Ascending aorta (tissue), 2 donors: ENCODE measurements at regions of chr2 and their contacts with region 1.

Region 1: DNA sequence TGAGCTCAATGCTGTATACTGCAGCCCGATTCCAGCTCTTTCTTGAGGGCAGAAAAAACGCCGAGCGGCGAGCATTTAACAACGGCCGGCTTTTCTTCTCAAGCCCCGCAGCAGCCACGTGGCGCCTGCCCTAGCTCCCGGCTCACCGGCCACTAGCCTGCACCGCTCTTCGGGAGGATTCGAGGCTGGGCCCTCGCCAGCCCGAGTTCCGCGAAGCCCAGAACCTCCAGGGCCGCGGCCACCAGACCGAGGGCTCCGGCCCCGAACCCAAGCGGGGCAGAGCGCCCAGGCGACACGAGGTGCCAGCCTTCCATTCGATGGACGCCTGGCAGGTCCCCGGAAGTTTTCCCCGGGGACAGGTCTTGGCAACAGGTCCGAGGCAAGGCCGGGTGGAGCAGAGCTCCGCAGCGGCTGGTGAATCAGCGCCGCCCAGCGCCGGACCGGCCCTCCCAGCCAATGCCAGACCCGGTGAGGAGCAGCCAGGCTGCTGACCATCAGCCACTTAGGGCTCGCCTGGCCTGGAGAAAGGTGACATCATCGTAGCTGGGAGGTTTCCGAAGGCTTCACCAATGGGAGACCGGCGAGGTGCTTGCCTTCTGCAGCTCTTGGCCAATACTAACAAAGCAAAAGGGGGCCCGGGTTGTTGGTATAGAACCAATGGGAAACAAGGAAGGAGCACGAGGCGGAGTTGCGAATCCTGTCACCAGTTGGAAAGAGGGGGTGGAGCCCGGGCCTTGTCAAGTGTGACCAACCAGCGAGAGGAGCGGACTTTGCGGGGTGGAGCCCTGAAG is 544 bp upstream of the MXD1 start:
- DNase-seq: peak; percentile 100
- H3K4me3 ChIP-seq: peak overlapping the region; percentile 67 to 76
- H3K27ac ChIP-seq: peak overlapping the region; percentile 92
- H3K4me1 ChIP-seq: peaks cover 0 to 17% of the 10 kb centered on the region in 2 donors
- H3K27me3 ChIP-seq: no peaks in the 10 kb centered on the region
- CTCF ChIP-seq: peak in 2 of 3 experiments; percentile 15 to 20

Region 2: DNA sequence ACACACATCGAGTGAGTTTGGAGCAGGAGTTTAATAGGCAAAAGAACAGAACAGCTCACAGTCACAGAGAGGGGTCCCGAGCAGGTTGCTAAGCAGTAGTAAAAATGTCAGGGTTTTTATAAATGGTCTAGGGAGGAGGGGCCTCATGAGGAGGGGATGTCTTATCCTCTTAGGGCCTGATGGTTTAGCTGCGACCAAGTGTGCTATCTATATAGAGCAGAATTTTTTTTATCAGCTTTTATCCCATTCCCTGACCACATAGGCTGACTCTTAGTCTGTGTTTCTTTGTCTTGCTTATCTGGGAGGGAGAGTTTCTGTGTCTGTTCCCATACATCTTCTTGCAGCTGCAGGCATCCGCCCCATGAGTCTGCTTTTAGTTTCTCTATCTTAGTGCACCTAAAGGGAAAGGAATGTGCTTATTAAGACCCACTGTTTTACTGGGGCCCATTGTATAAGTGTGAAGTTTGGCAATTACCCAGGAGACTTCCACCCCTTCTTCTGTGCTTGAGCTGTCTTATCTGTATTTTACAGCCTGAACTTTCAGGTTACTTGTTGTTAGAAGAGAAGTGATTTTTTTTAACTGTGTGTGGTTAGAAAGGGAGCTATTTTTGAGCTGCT is 115.3 kb before region 1 on chr2:
- intact Hi-C with region 1: no loop called
- DNase-seq: no peak
- H3K4me3 ChIP-seq: peak overlapping the region; percentile 49 to 64
- H3K27ac ChIP-seq: peak overlapping the region; percentile 84 to 85
- H3K4me1 ChIP-seq: peaks cover 0 to 13% of the 10 kb centered on the region in 2 donors
- H3K27me3 ChIP-seq: no peaks in the 10 kb centered on the region
- CTCF ChIP-seq: no peak

Region 3: DNA sequence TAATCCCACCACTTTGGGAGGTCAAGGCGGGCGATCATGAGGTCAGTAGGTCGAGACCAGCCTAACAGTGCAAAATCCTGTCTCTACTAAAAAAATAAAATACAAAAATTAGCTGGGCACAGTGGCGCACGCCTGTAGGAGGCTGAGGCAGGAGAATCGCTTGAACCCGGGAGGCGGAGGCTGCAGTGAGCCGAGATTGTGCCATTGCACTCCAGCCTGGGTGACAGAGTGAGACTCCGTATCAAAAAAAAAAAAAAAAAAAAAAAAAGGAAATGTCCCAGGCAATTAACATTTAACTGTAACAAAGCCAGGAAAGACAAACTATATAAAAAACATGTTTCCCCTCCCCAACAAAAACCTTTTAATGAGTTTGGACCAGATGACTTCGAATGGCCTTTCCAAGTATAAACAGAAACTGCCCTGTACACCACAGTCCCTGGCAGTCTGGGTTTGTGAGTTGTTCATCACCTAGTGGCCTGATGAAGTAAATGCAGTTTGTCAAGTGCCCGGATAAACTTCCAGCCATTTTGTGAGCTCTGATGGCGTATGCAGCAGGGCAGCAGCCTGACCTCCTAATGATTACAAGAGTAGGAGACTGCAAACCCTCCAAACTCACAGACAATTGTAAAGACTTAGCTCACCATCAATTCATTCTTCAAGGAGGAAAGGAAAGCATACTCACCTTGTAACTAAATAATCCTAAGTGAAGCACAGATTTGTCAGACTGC is 156.3 kb after region 1 on chr2:
- intact Hi-C with region 1: loop called (anchors 2 kb)
- DNase-seq: peak in 1 of 2 donors; percentile 87
- H3K4me3 ChIP-seq: peak overlapping the region in 1 of 2 donors; percentile 40
- H3K27ac ChIP-seq: peak overlapping the region; percentile 75 to 77
- H3K4me1 ChIP-seq: peaks cover 0 to 16% of the 10 kb centered on the region in 2 donors
- H3K27me3 ChIP-seq: no peaks in the 10 kb centered on the region
- CTCF ChIP-seq: peak; percentile 85 to 92 (median 88)

Region 4: DNA sequence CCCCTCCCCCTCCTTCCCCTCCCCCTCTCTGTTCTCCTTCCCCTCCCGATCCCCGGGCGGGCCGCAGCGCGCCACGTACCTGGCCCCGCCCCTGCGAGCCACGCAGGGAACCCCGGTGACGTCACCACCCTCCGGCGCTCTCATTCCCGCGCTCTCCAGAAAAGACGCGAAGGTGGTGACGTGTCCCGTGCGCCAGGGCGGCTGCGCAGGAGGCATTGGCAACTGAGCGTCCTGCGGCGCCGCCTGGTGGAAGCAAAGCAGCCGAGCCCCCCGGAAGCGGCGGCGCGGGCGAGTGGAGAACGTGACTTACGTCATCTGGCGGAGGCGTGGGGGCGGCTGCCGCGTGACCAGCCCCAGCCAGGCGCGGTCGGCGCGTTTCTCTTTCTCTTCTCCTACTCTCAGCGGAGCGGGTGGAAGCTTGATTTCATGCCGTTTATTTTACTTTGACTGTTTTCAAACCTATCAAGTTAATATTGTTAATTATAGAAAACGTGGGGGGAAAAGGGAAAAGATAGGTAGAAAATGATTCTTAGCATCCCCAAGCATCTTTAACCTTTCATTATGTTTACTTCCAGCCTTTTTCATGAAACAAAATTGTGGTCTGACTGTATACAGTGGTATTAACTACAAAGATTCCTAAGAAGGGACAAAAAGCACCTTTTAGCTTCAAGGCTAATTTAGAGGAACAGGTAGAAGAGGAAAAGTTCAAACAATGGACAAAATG is 228.4 kb after region 1 on chr2:
- intact Hi-C with region 1: loop called (anchors 1 kb)
- DNase-seq: peak; percentile 97 to 100
- H3K4me3 ChIP-seq: peak overlapping the region; percentile 42 to 66
- H3K27ac ChIP-seq: peak overlapping the region; percentile 93 to 98
- H3K4me1 ChIP-seq: peaks cover 5 to 8% of the 10 kb centered on the region in 2 donors
- H3K27me3 ChIP-seq: no peaks in the 10 kb centered on the region
- CTCF ChIP-seq: peak; percentile 90 to 100 (median 94)

Region 5: DNA sequence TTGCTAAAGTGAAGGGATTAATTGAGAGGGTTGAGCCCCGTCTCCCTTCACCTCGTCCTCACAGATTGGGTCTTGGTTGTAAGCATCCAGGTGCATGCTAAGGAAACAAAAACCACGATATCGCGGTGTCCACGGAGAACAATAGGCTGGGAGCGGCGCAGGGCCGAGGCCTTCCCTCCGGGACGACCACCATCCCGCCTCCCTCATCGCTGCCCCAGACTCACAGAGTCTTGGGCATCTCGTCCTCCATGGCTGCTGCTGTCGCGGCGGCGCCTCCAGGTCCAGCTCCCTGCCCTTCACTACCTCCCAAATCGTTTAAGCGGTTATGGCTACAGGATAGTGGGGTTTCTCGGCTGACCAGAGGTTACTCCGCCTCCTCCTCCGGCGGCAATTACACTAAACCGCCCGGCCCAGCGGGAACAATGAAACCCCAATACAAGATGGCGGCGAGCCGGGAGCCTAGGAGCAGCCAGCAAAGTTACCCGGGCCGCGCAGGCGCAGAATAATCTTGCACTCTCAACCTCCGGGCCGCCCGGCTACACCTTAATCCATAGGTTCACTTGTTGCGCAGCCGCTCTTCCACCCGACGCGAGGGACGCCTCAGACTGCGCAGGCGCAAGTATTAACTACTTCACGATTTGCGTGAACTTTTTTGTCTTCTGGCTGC is 333.9 kb after region 1 on chr2 and contains the start of gene TIA1:
- intact Hi-C with region 1: loop called (anchors 1 kb)
- DNase-seq: peak; percentile 93 to 99
- H3K4me3 ChIP-seq: peak within 1 kb of the TSS; percentile 69 to 70
- H3K27ac ChIP-seq: peak within 1 kb of the TSS; percentile 87 to 88
- H3K4me1 ChIP-seq: peaks cover 0 to 9% of the 10 kb centered on the region in 2 donors
- H3K27me3 ChIP-seq: no peaks in the 10 kb centered on the region
- CTCF ChIP-seq: no peak
- total RNA-seq, gene TIA1: 19.3 TPM

Region 6: DNA sequence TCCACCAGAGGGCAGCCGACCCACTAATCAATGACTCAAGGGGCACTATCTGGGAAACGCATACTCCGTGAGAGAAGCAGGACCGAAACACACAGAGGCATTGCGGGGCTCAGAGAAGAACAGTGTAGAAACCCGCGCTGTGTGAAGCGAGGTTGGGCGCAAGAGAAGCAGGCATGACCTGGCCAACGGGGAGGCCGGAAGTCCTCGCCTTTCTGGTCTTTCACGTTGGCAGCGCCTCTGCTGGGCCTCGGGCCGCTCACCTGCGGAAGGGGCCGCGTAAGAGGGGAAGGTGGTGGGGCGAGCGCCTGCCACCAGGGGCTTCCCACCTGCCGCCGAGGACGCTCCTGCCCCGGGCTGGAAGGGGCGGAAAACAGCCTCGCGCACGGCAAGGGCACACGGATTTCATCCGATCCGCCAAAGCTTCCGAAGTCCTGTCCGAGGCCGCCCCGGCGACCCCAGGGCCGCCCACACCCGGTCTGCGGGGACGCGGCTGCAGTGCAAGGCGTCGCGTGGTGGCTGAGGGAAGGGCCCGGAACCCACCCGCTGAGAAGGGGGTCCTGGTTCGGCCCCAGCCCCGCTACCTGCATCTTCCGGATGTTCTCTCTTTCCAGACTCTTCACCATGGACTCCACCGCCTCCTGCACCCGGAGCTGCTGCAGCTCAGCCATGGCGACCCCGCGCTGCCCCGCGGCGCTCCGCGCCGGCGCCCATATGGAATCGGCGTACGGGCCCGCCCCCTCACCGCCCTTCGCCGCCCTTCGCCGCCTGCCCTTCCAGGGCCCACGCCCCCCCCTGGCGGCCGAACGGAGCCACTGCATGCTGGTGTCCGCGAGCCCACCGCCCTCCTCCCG is 387.2 kb after region 1 on chr2 and contains the start of gene FAM136A:
- intact Hi-C with region 1: loop called (anchors 1 kb)
- DNase-seq: peak; percentile 16 to 90
- H3K4me3 ChIP-seq: peak within 1 kb of the TSS; percentile 66 to 84
- H3K27ac ChIP-seq: peak within 1 kb of the TSS; percentile 80
- H3K4me1 ChIP-seq: peaks cover 0 to 5% of the 10 kb centered on the region in 2 donors
- H3K27me3 ChIP-seq: no peaks in the 10 kb centered on the region
- CTCF ChIP-seq: peak; percentile 94 to 99 (median 97)
- total RNA-seq, gene FAM136A: 2.0 TPM